ENCODE measurements at regions of chr18 and their contacts with region 1.

Region 1: GRCh38 chr18:6624271-6624660 is 105.2 kb upstream of the ARHGAP28 start:
- DNase-seq: peak; percentile 53
- H3K4me3 ChIP-seq: no peak overlapping the region
- H3K27ac ChIP-seq: no peak overlapping the region
- H3K4me1 ChIP-seq: no peaks in the 10 kb centered on the region
- H3K27me3 ChIP-seq: no peaks in the 10 kb centered on the region
- CTCF ChIP-seq: no peak

Region 2: GRCh38 chr18:6566338-6566911 is 57.8 kb before region 1 on chr18:
- CTCF ChIA-PET with region 1: no interaction called
- dilution Hi-C with region 1: no loop called
- in situ Hi-C with region 1: no loop called
- intact Hi-C with region 1: loop called (anchors 2 kb)
- DNase-seq: peak; percentile 90
- H3K4me3 ChIP-seq: no peak overlapping the region
- H3K27ac ChIP-seq: no peak overlapping the region
- H3K4me1 ChIP-seq: no peaks in the 10 kb centered on the region
- H3K27me3 ChIP-seq: peaks cover 2% of the 10 kb centered on the region
- CTCF ChIP-seq: no peak

Region 3: GRCh38 chr18:6638447-6638846 is 14.2 kb after region 1 on chr18:
- CTCF ChIA-PET with region 1: no interaction called
- dilution Hi-C with region 1: no loop called
- in situ Hi-C with region 1: no loop called
- intact Hi-C with region 1: no loop called
- DNase-seq: no peak
- H3K4me3 ChIP-seq: no peak overlapping the region
- H3K27ac ChIP-seq: no peak overlapping the region
- H3K4me1 ChIP-seq: no peaks in the 10 kb centered on the region
- H3K27me3 ChIP-seq: no peaks in the 10 kb centered on the region
- CTCF ChIP-seq: no peak

Measured in mammary epithelial cell (primary cell).